CD4-positive, alpha-beta memory T cell (primary cell): ENCODE measurements at regions of chr5 and their contacts with region 1.

Region 1: DNA sequence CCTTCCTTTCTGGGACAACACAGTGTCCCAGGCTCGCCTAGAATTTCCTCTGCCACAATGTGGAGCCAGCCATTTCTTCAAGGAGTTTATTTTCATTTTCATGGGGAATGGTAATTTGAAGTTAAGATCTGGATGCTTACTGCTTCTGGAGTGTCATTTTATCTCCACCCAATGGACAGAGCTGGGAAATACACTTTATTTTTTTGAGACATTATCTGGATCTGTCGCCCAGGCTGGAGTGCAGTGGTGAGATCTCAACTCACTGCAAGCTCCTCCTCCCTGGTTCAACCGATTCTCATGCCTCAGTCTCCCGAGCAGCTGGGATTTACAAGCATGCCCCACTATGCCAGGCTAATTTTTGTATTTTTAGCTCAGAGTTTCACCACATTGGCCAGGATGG is 12.7 kb upstream of the THG1L start:
- DNase-seq: peak; percentile 37 to 61 (median 45)
- H3K4me3 ChIP-seq: no peak overlapping the region
- H3K4me3 Mint-ChIP-seq: peak overlapping the region in 6 of 8 donors; percentile 27 to 78 (median 54)
- H3K27ac ChIP-seq: no peak overlapping the region
- H3K27ac Mint-ChIP-seq: peak overlapping the region in 6 of 7 donors; percentile 23 to 72 (median 42)
- H3K4me1 ChIP-seq: peaks cover 21% of the 10 kb centered on the region
- H3K4me1 Mint-ChIP-seq: peaks cover 16 to 26% (median 20%) of the 10 kb centered on the region in 4 donors
- H3K27me3 ChIP-seq: no peaks in the 10 kb centered on the region
- H3K27me3 Mint-ChIP-seq: no peaks in the 10 kb centered on the region

Region 2: DNA sequence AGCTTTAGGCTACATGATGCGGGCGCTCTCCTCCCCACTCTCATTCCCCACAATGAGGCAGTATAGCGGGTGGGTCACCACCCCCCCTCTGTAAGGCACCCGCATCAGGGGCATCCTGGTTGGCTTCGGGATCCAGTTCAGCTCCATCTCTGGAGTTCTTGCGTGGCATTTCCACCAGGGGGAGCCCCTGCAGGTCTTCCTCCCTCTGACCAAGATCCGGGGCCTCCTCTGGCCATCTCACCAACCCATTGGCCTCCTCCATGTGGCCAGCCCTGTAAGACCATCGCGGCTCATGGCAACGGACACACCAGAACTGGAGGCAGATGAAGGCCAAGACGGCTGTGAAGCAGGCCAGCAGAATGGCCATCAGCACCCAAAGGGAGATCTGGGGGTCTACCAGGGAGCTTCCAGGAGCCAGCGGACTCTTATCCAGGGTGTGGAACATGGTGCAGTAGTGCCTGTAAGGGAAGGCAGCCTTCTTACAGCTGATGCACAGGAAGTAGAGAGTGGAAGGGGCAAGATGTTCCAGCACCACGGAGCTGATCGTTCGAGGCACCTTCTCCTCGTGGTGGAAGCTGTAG is 375.6 kb before region 1 on chr5:
- CTCF ChIA-PET with region 1: interaction called, 44 read pairs
- POLR2A ChIA-PET with region 1: no interaction called
- intact Hi-C with region 1: loop called (anchors 2 kb)
- DNase-seq: peak in 2 of 5 donors; percentile 15 to 21
- H3K4me3 ChIP-seq: no peak overlapping the region
- H3K4me3 Mint-ChIP-seq: peak overlapping the region in 1 of 8 donors; percentile 8
- H3K27ac ChIP-seq: no peak overlapping the region
- H3K27ac Mint-ChIP-seq: peak overlapping the region in 5 of 7 donors; percentile 18 to 89 (median 41)
- H3K4me1 ChIP-seq: peaks cover 15% of the 10 kb centered on the region
- H3K4me1 Mint-ChIP-seq: peaks cover 19 to 29% (median 24%) of the 10 kb centered on the region in 4 donors
- H3K27me3 ChIP-seq: no peaks in the 10 kb centered on the region
- H3K27me3 Mint-ChIP-seq: no peaks in the 10 kb centered on the region

Region 3: GRCh38 chr5:157471709-157472108 is 246.8 kb before region 1 on chr5:
- CTCF ChIA-PET with region 1: interaction called, 27 read pairs
- POLR2A ChIA-PET with region 1: interaction called, 4 read pairs
- intact Hi-C with region 1: loop called (anchors 2 kb)
- DNase-seq: no peak
- H3K4me3 ChIP-seq: no peak overlapping the region
- H3K4me3 Mint-ChIP-seq: no peak overlapping the region
- H3K27ac ChIP-seq: no peak overlapping the region
- H3K27ac Mint-ChIP-seq: no peak overlapping the region
- H3K4me1 ChIP-seq: no peaks in the 10 kb centered on the region
- H3K4me1 Mint-ChIP-seq: peaks cover under 1 to 4% (median 4%) of the 10 kb centered on the region in 4 donors
- H3K27me3 ChIP-seq: no peaks in the 10 kb centered on the region
- H3K27me3 Mint-ChIP-seq: no peaks in the 10 kb centered on the region

Region 4: GRCh38 chr5:157540707-157541446 is 177.6 kb before region 1 on chr5:
- CTCF ChIA-PET with region 1: interaction called, 5 read pairs
- POLR2A ChIA-PET with region 1: interaction called, 6 read pairs
- intact Hi-C with region 1: loop called (anchors 2 kb)
- DNase-seq: peak; percentile 53 to 75 (median 62)
- H3K4me3 ChIP-seq: peak overlapping the region; percentile 12 to 40
- H3K4me3 Mint-ChIP-seq: peak overlapping the region; percentile 71 to 90 (median 80)
- H3K27ac ChIP-seq: peak overlapping the region; percentile 77
- H3K27ac Mint-ChIP-seq: peak overlapping the region; percentile 89 to 95 (median 93)
- H3K4me1 ChIP-seq: peaks cover 95% of the 10 kb centered on the region
- H3K4me1 Mint-ChIP-seq: peaks cover 73 to 94% (median 84%) of the 10 kb centered on the region in 4 donors
- H3K27me3 ChIP-seq: no peaks in the 10 kb centered on the region
- H3K27me3 Mint-ChIP-seq: no peaks in the 10 kb centered on the region

Region 5: GRCh38 chr5:157603333-157604190 is 115.0 kb before region 1 on chr5:
- CTCF ChIA-PET with region 1: no interaction called
- POLR2A ChIA-PET with region 1: no interaction called
- intact Hi-C with region 1: no loop called
- DNase-seq: peak; percentile 72 to 93 (median 75)
- H3K4me3 ChIP-seq: no peak overlapping the region
- H3K4me3 Mint-ChIP-seq: peak overlapping the region; percentile 39 to 84 (median 70)
- H3K27ac ChIP-seq: peak overlapping the region; percentile 68
- H3K27ac Mint-ChIP-seq: peak overlapping the region; percentile 84 to 96 (median 86)
- H3K4me1 ChIP-seq: peaks cover 90% of the 10 kb centered on the region
- H3K4me1 Mint-ChIP-seq: peaks cover 45 to 69% (median 60%) of the 10 kb centered on the region in 4 donors
- H3K27me3 ChIP-seq: no peaks in the 10 kb centered on the region
- H3K27me3 Mint-ChIP-seq: no peaks in the 10 kb centered on the region

Region 6: GRCh38 chr5:157651623-157652549 is 66.6 kb before region 1 on chr5 and contains the start of gene SOX30:
- CTCF ChIA-PET with region 1: interaction called, 24 read pairs
- POLR2A ChIA-PET with region 1: no interaction called
- intact Hi-C with region 1: loop called (anchors 1 kb)
- DNase-seq: peak; percentile 85 to 89 (median 86)
- H3K4me3 ChIP-seq: peak within 1 kb of the TSS in 1 of 2 donors; percentile 51
- H3K4me3 Mint-ChIP-seq: peak within 1 kb of the TSS; percentile 78 to 89 (median 84)
- H3K27ac ChIP-seq: peak within 1 kb of the TSS; percentile 52
- H3K27ac Mint-ChIP-seq: peak within 1 kb of the TSS; percentile 65 to 91 (median 86)
- H3K4me1 ChIP-seq: peaks cover 18% of the 10 kb centered on the region
- H3K4me1 Mint-ChIP-seq: peaks cover 11 to 26% (median 18%) of the 10 kb centered on the region in 4 donors
- H3K27me3 ChIP-seq: no peaks in the 10 kb centered on the region
- H3K27me3 Mint-ChIP-seq: no peaks in the 10 kb centered on the region
- total RNA-seq, gene SOX30: 0.14 to 0.15 TPM

Region 7: GRCh38 chr5:157689942-157690689 is 28.4 kb before region 1 on chr5:
- CTCF ChIA-PET with region 1: interaction called, 22 read pairs
- POLR2A ChIA-PET with region 1: interaction called, 3 read pairs
- intact Hi-C with region 1: no loop called
- DNase-seq: peak in 2 of 5 donors; percentile 7 to 29
- H3K4me3 ChIP-seq: no peak overlapping the region
- H3K4me3 Mint-ChIP-seq: no peak overlapping the region
- H3K27ac ChIP-seq: no peak overlapping the region
- H3K27ac Mint-ChIP-seq: no peak overlapping the region
- H3K4me1 ChIP-seq: no peaks in the 10 kb centered on the region
- H3K4me1 Mint-ChIP-seq: no peaks in the 10 kb centered on the region
- H3K27me3 ChIP-seq: no peaks in the 10 kb centered on the region
- H3K27me3 Mint-ChIP-seq: no peaks in the 10 kb centered on the region

Region 8: GRCh38 chr5:157743163-157744050 is 24.9 kb after region 1 on chr5 and contains the start of gene LSM11:
- CTCF ChIA-PET with region 1: interaction called, 44 read pairs
- POLR2A ChIA-PET with region 1: interaction called, 4 read pairs
- intact Hi-C with region 1: loop called (anchors 1 kb)
- DNase-seq: peak; percentile 85 to 94 (median 88)
- H3K4me3 ChIP-seq: peak within 1 kb of the TSS; percentile 50 to 63
- H3K4me3 Mint-ChIP-seq: peak within 1 kb of the TSS; percentile 93 to 98 (median 96)
- H3K27ac ChIP-seq: peak within 1 kb of the TSS; percentile 45
- H3K27ac Mint-ChIP-seq: peak within 1 kb of the TSS; percentile 62 to 96 (median 94)
- H3K4me1 ChIP-seq: peaks cover 18% of the 10 kb centered on the region
- H3K4me1 Mint-ChIP-seq: peaks cover 19 to 34% (median 28%) of the 10 kb centered on the region in 4 donors
- H3K27me3 ChIP-seq: no peaks in the 10 kb centered on the region
- H3K27me3 Mint-ChIP-seq: no peaks in the 10 kb centered on the region
- total RNA-seq, gene LSM11: 4.4 to 4.8 TPM

Region 9: GRCh38 chr5:158560170-158560569 is 841.7 kb after region 1 on chr5:
- CTCF ChIA-PET with region 1: no interaction called
- POLR2A ChIA-PET with region 1: no interaction called
- intact Hi-C with region 1: no loop called
- DNase-seq: no peak
- H3K4me3 ChIP-seq: no peak overlapping the region
- H3K4me3 Mint-ChIP-seq: no peak overlapping the region
- H3K27ac ChIP-seq: no peak overlapping the region
- H3K27ac Mint-ChIP-seq: no peak overlapping the region
- H3K4me1 ChIP-seq: no peaks in the 10 kb centered on the region
- H3K4me1 Mint-ChIP-seq: no peaks in the 10 kb centered on the region
- H3K27me3 ChIP-seq: no peaks in the 10 kb centered on the region
- H3K27me3 Mint-ChIP-seq: peaks cover 0 to 3% of the 10 kb centered on the region in 2 donors